Natural killer cell (primary cell): ENCODE measurements at regions of chr15 and their contacts with region 1.

Region 1: DNA sequence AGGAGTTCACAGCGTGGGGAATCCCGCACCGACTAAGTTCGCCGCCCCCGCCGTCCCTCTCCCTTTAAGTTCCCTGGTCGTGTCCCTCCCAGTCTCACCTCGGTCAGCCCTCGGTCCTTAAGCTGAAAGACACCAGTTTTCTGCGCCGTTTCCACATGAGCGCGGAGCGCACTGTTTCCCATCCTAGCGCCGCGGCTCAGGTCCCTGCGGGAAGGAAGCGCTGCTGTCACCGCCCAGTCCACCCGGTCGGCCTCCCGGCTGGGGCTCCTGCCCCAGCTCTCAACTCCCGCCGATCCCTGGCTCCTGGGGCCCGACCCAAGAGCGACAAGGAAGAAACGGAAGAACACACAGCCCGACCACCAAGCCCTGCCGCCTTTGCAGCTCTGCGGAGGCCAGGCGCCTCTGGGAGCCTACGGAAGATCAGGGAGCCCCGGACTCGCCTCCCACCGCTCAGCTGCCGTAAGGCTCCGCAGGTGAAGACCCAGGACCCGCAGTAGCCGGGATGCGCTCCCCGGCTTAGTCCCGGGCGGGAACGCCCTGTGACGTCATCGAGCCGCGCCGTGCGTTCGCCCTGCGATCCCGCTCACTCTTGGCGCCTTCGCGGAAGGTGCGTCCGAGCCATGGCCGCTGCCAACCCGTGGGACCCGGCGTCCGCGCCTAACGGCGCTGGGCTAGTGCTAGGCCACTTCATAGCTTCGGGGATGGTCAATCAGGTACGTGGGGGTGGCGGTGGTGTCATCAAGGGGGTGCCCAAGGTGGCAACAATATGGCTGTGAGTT is at the starts of genes HAUS2 and LRRC57:
- DNase-seq: peak; percentile 85 to 93
- ATAC-seq: peak; percentile 86 to 91 (median 90)
- H3K4me3 ChIP-seq: peak within 1 kb of the TSS; percentile 96
- H3K4me3 Mint-ChIP-seq: peak within 1 kb of the TSS; percentile 99
- H3K27ac ChIP-seq: peak within 1 kb of the TSS; percentile 84
- H3K27ac Mint-ChIP-seq: peak within 1 kb of the TSS; percentile 94 to 96
- H3K4me1 ChIP-seq: peaks cover 23% of the 10 kb centered on the region
- H3K4me1 Mint-ChIP-seq: peaks cover 36 to 37% of the 10 kb centered on the region in 2 donors
- H3K27me3 ChIP-seq: no peaks in the 10 kb centered on the region
- H3K27me3 Mint-ChIP-seq: no peaks in the 10 kb centered on the region
- CTCF ChIP-seq: no peak
- total RNA-seq, gene HAUS2: 24.9 to 26.2 (median 26.1) TPM
- total RNA-seq, gene LRRC57: 29.4 to 43.9 (median 29.4) TPM

Region 2: DNA sequence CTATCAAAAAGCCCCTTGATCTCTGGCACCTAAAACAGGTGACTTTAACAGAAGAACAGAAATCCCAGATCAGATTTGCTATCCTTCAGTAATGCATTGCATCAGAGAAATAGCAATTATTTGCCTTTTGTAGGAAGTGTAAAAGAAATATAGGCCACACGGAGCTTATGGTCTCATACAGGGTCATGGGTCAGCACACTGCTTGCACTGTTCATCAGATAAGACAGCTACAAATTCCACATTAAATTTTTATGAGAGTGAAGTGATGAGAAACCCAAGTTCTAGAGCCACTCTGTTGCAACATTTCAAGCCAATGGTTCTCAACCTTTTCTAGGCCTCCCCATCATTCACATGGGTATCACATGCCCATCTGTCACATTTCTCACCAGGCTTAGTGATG is 241.8 kb before region 1 on chr15:
- intact Hi-C with region 1: no loop called
- DNase-seq: no peak
- ATAC-seq: no peak
- H3K4me3 ChIP-seq: no peak overlapping the region
- H3K4me3 Mint-ChIP-seq: no peak overlapping the region
- H3K27ac ChIP-seq: no peak overlapping the region
- H3K27ac Mint-ChIP-seq: no peak overlapping the region
- H3K4me1 ChIP-seq: no peaks in the 10 kb centered on the region
- H3K4me1 Mint-ChIP-seq: no peaks in the 10 kb centered on the region
- H3K27me3 ChIP-seq: no peaks in the 10 kb centered on the region
- H3K27me3 Mint-ChIP-seq: no peaks in the 10 kb centered on the region
- CTCF ChIP-seq: no peak

Region 3: GRCh38 chr15:42575188-42576039 is 27.0 kb after region 1 on chr15 and contains the start of gene STARD9:
- intact Hi-C with region 1: loop called (anchors 2 kb)
- DNase-seq: peak; percentile 94 to 96
- ATAC-seq: peak; percentile 89 to 97 (median 91)
- H3K4me3 ChIP-seq: peak within 1 kb of the TSS; percentile 79
- H3K4me3 Mint-ChIP-seq: peak within 1 kb of the TSS; percentile 93
- H3K27ac ChIP-seq: peak within 1 kb of the TSS; percentile 19
- H3K27ac Mint-ChIP-seq: peak within 1 kb of the TSS; percentile 64 to 83
- H3K4me1 ChIP-seq: peaks cover 24% of the 10 kb centered on the region
- H3K4me1 Mint-ChIP-seq: peaks cover 21 to 36% of the 10 kb centered on the region in 2 donors
- H3K27me3 ChIP-seq: no peaks in the 10 kb centered on the region
- H3K27me3 Mint-ChIP-seq: no peaks in the 10 kb centered on the region
- CTCF ChIP-seq: no peak
- total RNA-seq, gene STARD9: 20.0 to 22.5 (median 20.1) TPM

Region 4: GRCh38 chr15:42608110-42608531 is 59.7 kb after region 1 on chr15:
- intact Hi-C with region 1: loop called (anchors 5 kb)
- DNase-seq: peak; percentile 61 to 64
- ATAC-seq: peak; percentile 58 to 83 (median 77)
- H3K4me3 ChIP-seq: no peak overlapping the region
- H3K4me3 Mint-ChIP-seq: peak overlapping the region; percentile 84
- H3K27ac ChIP-seq: peak overlapping the region; percentile 42
- H3K27ac Mint-ChIP-seq: peak overlapping the region; percentile 76 to 86
- H3K4me1 ChIP-seq: peaks cover 43% of the 10 kb centered on the region
- H3K4me1 Mint-ChIP-seq: peaks cover 46 to 50% of the 10 kb centered on the region in 2 donors
- H3K27me3 ChIP-seq: no peaks in the 10 kb centered on the region
- H3K27me3 Mint-ChIP-seq: no peaks in the 10 kb centered on the region
- CTCF ChIP-seq: no peak

Region 5: DNA sequence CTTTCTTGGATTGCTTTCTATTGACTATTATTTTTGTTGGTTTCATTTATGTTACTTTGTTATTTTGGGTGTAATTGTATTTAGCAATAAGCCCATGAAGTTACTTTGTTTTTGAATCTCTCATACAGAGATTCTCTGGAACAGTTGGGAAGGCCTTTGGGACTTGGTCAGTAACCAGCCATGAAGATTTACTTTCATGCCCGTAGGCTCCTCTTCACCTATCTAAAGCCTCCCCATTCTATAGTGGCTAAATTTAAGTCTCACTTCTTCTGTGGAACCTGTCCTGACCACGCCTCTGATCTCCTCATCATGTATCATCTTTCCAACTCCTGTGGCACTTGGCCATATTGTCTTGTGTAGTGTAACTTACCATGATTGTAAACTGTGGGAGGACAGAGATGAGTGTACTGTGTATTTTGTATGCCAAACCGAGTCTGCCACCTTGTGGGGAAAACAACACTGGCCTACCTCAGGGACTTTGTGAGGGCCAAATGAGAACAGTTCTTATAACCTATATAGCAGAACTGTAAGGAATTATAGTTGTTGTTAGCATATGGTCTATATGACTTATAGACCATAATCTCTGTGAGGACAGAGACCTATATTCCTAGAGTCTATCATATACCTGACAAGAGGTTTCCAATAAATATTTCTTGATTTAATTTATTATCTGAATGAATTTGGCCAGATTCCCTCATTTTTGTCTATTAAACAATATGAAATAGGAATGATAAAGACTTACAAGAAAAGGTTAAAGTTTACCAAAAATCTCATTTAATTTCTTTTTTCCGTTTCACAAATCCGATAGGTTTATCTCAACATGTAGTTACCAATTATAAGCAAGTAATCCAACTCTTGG is 102.0 kb after region 1 on chr15:
- intact Hi-C with region 1: loop called (anchors 2 kb)
- DNase-seq: peak; percentile 45 to 76
- ATAC-seq: peak; percentile 88 to 99 (median 96)
- H3K4me3 ChIP-seq: no peak overlapping the region
- H3K4me3 Mint-ChIP-seq: no peak overlapping the region
- H3K27ac ChIP-seq: no peak overlapping the region
- H3K27ac Mint-ChIP-seq: peak overlapping the region in 1 of 2 donors; percentile 47
- H3K4me1 ChIP-seq: no peaks in the 10 kb centered on the region
- H3K4me1 Mint-ChIP-seq: peaks cover 10 to 13% of the 10 kb centered on the region in 2 donors
- H3K27me3 ChIP-seq: no peaks in the 10 kb centered on the region
- H3K27me3 Mint-ChIP-seq: no peaks in the 10 kb centered on the region
- CTCF ChIP-seq: peak; percentile 73

Region 6: GRCh38 chr15:42760759-42761158 is 212.3 kb after region 1 on chr15:
- intact Hi-C with region 1: no loop called
- DNase-seq: no peak
- ATAC-seq: no peak
- H3K4me3 ChIP-seq: no peak overlapping the region
- H3K4me3 Mint-ChIP-seq: no peak overlapping the region
- H3K27ac ChIP-seq: no peak overlapping the region
- H3K27ac Mint-ChIP-seq: no peak overlapping the region
- H3K4me1 ChIP-seq: no peaks in the 10 kb centered on the region
- H3K4me1 Mint-ChIP-seq: peaks cover 4 to 10% of the 10 kb centered on the region in 2 donors
- H3K27me3 ChIP-seq: no peaks in the 10 kb centered on the region
- H3K27me3 Mint-ChIP-seq: no peaks in the 10 kb centered on the region
- CTCF ChIP-seq: no peak